Naive thymus-derived CD4-positive, alpha-beta T cell (primary cell): ENCODE measurements at regions of chr5 and their contacts with region 1.

Region 1: DNA sequence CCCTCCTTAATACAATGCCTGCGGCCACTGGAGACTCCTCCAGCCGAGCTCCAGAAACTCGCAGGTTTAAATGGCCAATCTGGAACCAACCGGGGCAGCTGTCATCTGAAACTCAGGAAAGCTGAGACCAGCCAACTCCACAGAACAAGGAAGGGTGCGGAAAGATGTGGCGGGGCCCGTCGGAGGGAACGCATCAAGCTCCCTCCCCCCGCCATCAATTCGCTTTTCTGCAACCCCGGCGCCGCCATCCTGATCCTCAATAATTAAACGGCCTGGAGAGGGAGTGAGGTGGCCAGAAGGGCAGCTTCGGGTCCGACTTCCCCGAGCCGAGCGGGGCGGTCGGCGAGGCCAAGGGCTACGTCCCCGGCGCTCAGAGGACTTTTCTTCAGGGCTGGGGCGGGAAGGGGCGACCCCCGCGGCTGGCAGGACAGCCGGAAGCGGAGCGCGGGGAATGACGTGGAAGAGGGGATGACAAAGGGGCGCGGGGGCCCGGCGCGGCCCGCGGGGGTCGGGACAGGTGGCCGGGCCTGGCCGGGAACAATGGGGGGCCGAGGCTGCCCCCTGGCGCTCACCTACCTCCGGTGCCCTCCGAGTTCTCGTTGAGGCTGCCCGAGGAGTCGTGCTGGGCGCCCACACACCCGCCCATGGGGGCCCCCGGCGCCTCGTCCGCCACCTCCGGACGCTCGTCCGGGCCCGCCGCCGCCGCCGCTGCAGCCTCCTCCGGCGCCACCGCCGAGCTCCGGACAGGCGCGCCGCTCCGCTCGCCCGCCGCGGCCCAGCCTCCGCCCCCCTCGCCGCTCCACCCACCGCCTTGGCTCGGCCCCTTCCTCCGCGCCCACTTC is at the start of gene UBTD2:
- DNase-seq: peak in 7 of 9 donors; percentile 51 to 84 (median 67)
- ATAC-seq: peak; percentile 89
- H3K4me3 ChIP-seq: peak within 1 kb of the TSS; percentile 73
- H3K4me3 Mint-ChIP-seq: peak within 1 kb of the TSS; percentile 85 to 94 (median 90)
- H3K27ac ChIP-seq: peak within 1 kb of the TSS; percentile 61
- H3K27ac Mint-ChIP-seq: peak within 1 kb of the TSS; percentile 67 to 94 (median 75)
- H3K4me1 ChIP-seq: peaks cover 11 to 13% of the 10 kb centered on the region in 2 donors
- H3K4me1 Mint-ChIP-seq: peaks cover 10 to 34% (median 29%) of the 10 kb centered on the region in 7 donors
- H3K27me3 ChIP-seq: no peaks in the 10 kb centered on the region
- H3K27me3 Mint-ChIP-seq: peaks cover 0 to 24% (median 0%) of the 10 kb centered on the region in 5 donors
- total RNA-seq, gene UBTD2: 2.3 to 8.3 (median 5.9) TPM

Region 2: DNA sequence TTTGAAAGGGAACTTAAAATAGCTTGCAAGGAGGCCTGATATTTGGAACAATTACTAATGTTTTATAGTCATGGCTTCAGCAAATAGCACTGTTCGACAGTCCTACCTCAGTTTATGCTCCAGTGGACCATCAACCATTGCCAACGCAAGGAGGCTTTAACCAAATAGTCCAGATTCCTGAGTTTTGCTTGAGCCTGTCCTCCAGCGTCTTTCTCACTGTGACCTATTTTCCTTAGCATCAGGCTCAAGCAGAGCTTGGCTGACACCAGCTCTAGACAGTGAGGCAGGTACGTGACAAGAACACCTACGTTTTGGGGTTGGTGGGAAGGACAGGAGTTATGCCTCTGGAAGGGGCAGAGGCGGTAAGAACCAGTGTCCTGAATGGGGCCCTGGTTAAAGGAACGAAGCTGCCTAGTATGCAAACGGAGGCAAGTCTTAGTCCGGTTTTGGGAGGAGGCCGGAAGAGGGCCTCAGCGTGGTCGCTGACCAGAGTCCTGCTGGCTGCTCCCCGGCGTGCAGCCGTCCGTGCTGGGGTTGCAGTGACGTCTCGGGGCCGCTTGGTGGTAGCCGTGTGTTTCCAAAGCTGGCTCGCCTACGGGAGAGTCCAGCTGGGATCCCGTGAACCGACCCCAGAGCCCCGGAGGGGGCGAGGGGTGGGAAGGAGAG is 864.8 kb before region 1 on chr5:
- CTCF ChIA-PET with region 1: interaction called, 3 read pairs
- POLR2A ChIA-PET with region 1: no interaction called
- intact Hi-C with region 1: loop called in 1 of 2 experiments (anchors 10 kb)
- DNase-seq: peak in 7 of 9 donors; percentile 17 to 68 (median 20)
- ATAC-seq: peak; percentile 66
- H3K4me3 ChIP-seq: peak overlapping the region; percentile 45
- H3K4me3 Mint-ChIP-seq: peak overlapping the region; percentile 58 to 86 (median 73)
- H3K27ac ChIP-seq: no peak overlapping the region
- H3K27ac Mint-ChIP-seq: no peak overlapping the region
- H3K4me1 ChIP-seq: peaks cover 5 to 15% of the 10 kb centered on the region in 2 donors
- H3K4me1 Mint-ChIP-seq: peaks cover 6 to 20% (median 11%) of the 10 kb centered on the region in 7 donors
- H3K27me3 ChIP-seq: peaks cover 3 to 4% of the 10 kb centered on the region in 2 donors
- H3K27me3 Mint-ChIP-seq: peaks cover 11 to 33% (median 19%) of the 10 kb centered on the region in 5 donors

Region 3: DNA sequence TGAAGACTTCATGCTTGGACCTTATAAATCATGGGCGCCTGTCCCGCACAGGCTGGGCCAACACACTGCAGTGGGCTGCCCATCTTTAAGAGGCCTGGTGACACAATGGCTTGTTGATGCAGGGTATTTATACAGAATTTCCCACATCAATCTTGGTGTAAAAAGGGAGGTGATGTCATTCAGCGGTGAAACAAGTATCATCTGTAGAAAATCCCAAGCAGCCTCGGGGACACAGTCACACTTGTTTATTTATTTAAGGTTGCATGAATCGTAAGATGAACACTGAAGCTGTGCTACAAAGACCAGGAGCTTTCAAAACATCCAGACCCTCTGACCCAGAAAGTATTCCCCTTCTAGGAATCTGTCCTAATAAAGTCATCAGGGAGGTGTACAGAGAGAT is 457.1 kb before region 1 on chr5:
- CTCF ChIA-PET with region 1: no interaction called
- POLR2A ChIA-PET with region 1: no interaction called
- intact Hi-C with region 1: no loop called
- DNase-seq: no peak
- ATAC-seq: no peak
- H3K4me3 ChIP-seq: no peak overlapping the region
- H3K4me3 Mint-ChIP-seq: no peak overlapping the region
- H3K27ac ChIP-seq: no peak overlapping the region
- H3K27ac Mint-ChIP-seq: no peak overlapping the region
- H3K4me1 ChIP-seq: no peaks in the 10 kb centered on the region
- H3K4me1 Mint-ChIP-seq: no peaks in the 10 kb centered on the region
- H3K27me3 ChIP-seq: no peaks in the 10 kb centered on the region
- H3K27me3 Mint-ChIP-seq: peaks cover 0 to 6% (median 0%) of the 10 kb centered on the region in 5 donors

Region 4: GRCh38 chr5:172106511-172107356 is 176.5 kb before region 1 on chr5:
- CTCF ChIA-PET with region 1: interaction called, 5 read pairs
- POLR2A ChIA-PET with region 1: no interaction called
- intact Hi-C with region 1: loop called (anchors 1 to 2 kb)
- DNase-seq: peak; percentile 31 to 78 (median 59)
- ATAC-seq: peak; percentile 43
- H3K4me3 ChIP-seq: no peak overlapping the region
- H3K4me3 Mint-ChIP-seq: peak overlapping the region in 8 of 10 donors; percentile 20 to 49 (median 39)
- H3K27ac ChIP-seq: peak overlapping the region; percentile 24
- H3K27ac Mint-ChIP-seq: peak overlapping the region; percentile 18 to 88 (median 81)
- H3K4me1 ChIP-seq: peaks cover 31 to 37% of the 10 kb centered on the region in 2 donors
- H3K4me1 Mint-ChIP-seq: peaks cover 23 to 61% (median 43%) of the 10 kb centered on the region in 7 donors
- H3K27me3 ChIP-seq: no peaks in the 10 kb centered on the region
- H3K27me3 Mint-ChIP-seq: no peaks in the 10 kb centered on the region

Region 5: DNA sequence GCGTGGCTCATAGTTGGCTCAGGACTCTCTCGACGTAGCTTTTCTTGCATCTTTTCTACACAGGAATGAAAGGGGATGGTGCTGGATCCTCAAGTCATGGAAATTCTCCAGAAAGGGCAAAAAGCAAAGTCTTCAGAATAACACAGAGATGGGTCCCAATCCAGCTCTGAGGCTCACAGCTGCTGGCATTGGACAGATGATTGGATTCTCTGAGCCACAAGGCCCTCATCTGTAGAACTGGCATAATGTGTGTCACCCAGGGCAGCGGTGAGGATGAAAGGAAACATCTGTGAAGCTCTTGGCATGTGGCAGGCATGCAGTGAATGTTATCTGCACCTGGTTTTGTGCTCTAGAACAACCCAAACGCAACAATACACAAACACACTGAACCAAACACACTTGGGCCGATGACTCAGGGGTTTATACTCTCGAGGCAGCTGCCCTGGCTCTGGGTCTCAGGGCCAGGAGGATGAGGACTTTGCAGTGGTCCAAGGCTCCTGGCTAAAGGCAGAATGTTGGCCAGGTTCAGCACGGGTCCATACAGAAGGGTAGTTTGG is 64.3 kb after region 1 on chr5:
- CTCF ChIA-PET with region 1: no interaction called
- POLR2A ChIA-PET with region 1: no interaction called
- intact Hi-C with region 1: no loop called
- DNase-seq: no peak
- ATAC-seq: no peak
- H3K4me3 ChIP-seq: no peak overlapping the region
- H3K4me3 Mint-ChIP-seq: no peak overlapping the region
- H3K27ac ChIP-seq: no peak overlapping the region
- H3K27ac Mint-ChIP-seq: no peak overlapping the region
- H3K4me1 ChIP-seq: no peaks in the 10 kb centered on the region
- H3K4me1 Mint-ChIP-seq: peaks cover 0 to 5% (median 0%) of the 10 kb centered on the region in 7 donors
- H3K27me3 ChIP-seq: no peaks in the 10 kb centered on the region
- H3K27me3 Mint-ChIP-seq: peaks cover 0 to 5% (median 0%) of the 10 kb centered on the region in 5 donors

Region 6: DNA sequence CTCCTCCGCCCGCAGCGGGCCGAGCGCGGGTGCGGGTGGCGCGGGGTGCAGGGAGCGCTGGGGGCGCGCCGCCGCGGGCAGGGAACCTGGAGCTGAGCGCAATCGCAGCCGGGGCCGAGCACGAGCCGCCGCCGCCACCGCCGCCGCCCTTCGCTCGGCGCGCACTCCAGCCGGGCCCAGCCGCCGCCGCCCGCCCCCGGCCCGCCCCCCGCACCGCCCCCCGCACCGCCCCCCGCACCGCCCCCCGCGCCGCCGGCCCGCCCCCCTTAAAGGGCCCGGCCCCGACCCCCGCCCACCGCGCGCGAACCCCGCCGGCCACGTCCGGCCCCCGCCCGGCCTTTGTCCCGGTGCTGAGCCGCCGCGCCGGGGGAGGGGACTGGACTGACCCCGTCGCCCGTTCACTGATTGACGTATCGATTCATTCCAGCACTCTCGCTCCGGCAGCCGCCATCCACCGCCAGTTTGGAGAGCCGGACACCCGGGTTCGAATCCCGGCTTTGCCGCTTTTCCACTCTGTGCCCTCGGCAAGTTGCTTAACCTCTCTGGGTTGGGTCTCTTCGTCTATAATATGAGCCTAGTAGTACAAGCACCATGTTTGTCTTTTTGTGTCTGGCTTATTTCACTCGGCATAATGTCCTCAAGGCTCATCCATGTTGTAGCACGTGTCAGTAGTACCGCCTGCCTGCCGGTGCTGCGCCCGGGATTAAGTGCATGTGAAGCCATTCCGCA is 171.3 kb after region 1 on chr5 and contains the start of gene SH3PXD2B:
- CTCF ChIA-PET with region 1: no interaction called
- POLR2A ChIA-PET with region 1: no interaction called
- intact Hi-C with region 1: loop called in 1 of 2 experiments (anchors 10 kb)
- DNase-seq: peak in 7 of 9 donors; percentile 11 to 52 (median 47)
- ATAC-seq: peak; percentile 73
- H3K4me3 ChIP-seq: peak within 1 kb of the TSS; percentile 36
- H3K4me3 Mint-ChIP-seq: peak within 1 kb of the TSS; percentile 82 to 93 (median 86)
- H3K27ac ChIP-seq: no peak within 1 kb of the TSS
- H3K27ac Mint-ChIP-seq: peak within 1 kb of the TSS in 7 of 9 donors; percentile 39 to 66 (median 52)
- H3K4me1 ChIP-seq: no peaks in the 10 kb centered on the region
- H3K4me1 Mint-ChIP-seq: peaks cover 8 to 17% (median 13%) of the 10 kb centered on the region in 7 donors
- H3K27me3 ChIP-seq: peaks cover 0 to 4% of the 10 kb centered on the region in 2 donors
- H3K27me3 Mint-ChIP-seq: peaks cover 12 to 59% (median 39%) of the 10 kb centered on the region in 5 donors
- total RNA-seq, gene SH3PXD2B: 0.15 to 1.1 (median 0.34) TPM